Naive thymus-derived CD4-positive, alpha-beta T cell (primary cell): ENCODE measurements at regions of chr5 and their contacts with region 1.

Region 1: GRCh38 chr5:91641730-91642350 is 258.7 kb upstream of the ARRDC3 start:
- DNase-seq: peak in 5 of 9 donors; percentile 1 to 27 (median 13)
- ATAC-seq: no peak
- H3K4me3 ChIP-seq: no peak overlapping the region
- H3K4me3 Mint-ChIP-seq: no peak overlapping the region
- H3K27ac ChIP-seq: no peak overlapping the region
- H3K27ac Mint-ChIP-seq: no peak overlapping the region
- H3K4me1 ChIP-seq: no peaks in the 10 kb centered on the region
- H3K4me1 Mint-ChIP-seq: no peaks in the 10 kb centered on the region
- H3K27me3 ChIP-seq: no peaks in the 10 kb centered on the region
- H3K27me3 Mint-ChIP-seq: peaks cover 0 to 11% (median 4%) of the 10 kb centered on the region in 5 donors

Region 2: DNA sequence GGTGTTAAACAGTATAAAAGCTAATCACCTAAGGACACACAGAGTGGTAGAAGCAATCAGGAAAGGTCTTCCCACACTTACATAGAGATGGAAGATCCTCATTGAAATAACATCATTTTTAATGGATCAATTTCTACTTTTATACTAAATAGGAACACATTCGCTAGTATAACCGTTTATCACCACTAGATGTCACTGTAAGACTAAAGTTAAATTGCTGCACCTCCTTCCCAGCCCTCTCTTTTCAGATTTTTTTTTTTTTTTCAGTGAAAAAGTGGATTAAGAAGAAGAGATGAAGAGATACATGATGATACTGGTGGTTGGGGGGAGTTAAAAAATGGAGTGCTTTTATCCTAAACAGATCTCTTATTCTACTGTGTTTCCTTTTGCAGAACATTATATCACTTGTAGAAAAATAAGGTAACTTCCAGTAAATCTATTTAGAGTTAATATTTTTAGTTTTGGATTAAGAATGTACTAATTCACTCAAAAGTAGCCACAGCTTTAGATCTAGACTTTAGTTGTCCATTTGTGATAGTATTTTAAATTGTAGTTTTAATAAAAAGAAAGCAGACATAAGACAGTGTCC is 141.8 kb before region 1 on chr5:
- CTCF ChIA-PET with region 1: no interaction called
- POLR2A ChIA-PET with region 1: no interaction called
- intact Hi-C with region 1: loop called in 1 of 2 experiments (anchors 1 kb)
- DNase-seq: peak in 7 of 9 donors; percentile 10 to 51 (median 32)
- ATAC-seq: peak; percentile 55
- H3K4me3 ChIP-seq: no peak overlapping the region
- H3K4me3 Mint-ChIP-seq: no peak overlapping the region
- H3K27ac ChIP-seq: no peak overlapping the region
- H3K27ac Mint-ChIP-seq: no peak overlapping the region
- H3K4me1 ChIP-seq: no peaks in the 10 kb centered on the region
- H3K4me1 Mint-ChIP-seq: peaks cover 0 to 4% (median 0%) of the 10 kb centered on the region in 7 donors
- H3K27me3 ChIP-seq: no peaks in the 10 kb centered on the region
- H3K27me3 Mint-ChIP-seq: peaks cover 0 to 2% (median 0%) of the 10 kb centered on the region in 5 donors

Region 3: DNA sequence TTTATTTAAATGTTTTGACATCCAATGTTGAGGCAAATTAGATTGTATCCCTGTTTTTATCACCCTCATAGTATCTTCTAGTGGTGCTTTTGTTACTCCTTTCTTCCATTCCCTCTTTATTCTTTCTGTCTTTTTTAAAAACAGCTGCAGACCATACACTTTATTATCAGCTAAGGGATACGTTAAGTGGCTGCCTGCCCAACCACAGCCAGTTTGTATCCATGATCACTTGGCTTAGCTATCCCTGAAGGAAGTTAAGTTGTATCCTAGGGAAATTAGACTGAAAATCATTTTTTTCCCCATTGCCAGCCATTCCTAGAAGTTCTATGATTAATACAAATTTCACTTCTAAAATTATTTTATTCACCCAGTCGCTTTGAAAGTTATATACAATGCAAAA is 906.5 kb after region 1 on chr5:
- CTCF ChIA-PET with region 1: no interaction called
- POLR2A ChIA-PET with region 1: no interaction called
- intact Hi-C with region 1: loop called in 1 of 2 experiments (anchors 5 kb)
- DNase-seq: no peak
- ATAC-seq: no peak
- H3K4me3 ChIP-seq: no peak overlapping the region
- H3K4me3 Mint-ChIP-seq: no peak overlapping the region
- H3K27ac ChIP-seq: no peak overlapping the region
- H3K27ac Mint-ChIP-seq: no peak overlapping the region
- H3K4me1 ChIP-seq: no peaks in the 10 kb centered on the region
- H3K4me1 Mint-ChIP-seq: no peaks in the 10 kb centered on the region
- H3K27me3 ChIP-seq: no peaks in the 10 kb centered on the region
- H3K27me3 Mint-ChIP-seq: no peaks in the 10 kb centered on the region